ENCODE measurements at regions of chr16 and their contacts with region 1.

Region 1: GRCh38 chr16:23496826-23497542 is 13.3 kb downstream of the GGA2 start:
- DNase-seq: peak; percentile 62
- H3K4me3 Mint-ChIP-seq: peak overlapping the region; percentile 33
- H3K27ac Mint-ChIP-seq: peak overlapping the region; percentile 33
- H3K4me1 Mint-ChIP-seq: peaks cover 29% of the 10 kb centered on the region
- H3K27me3 Mint-ChIP-seq: no peaks in the 10 kb centered on the region
- CTCF ChIP-seq: no peak

Region 2: GRCh38 chr16:23510164-23510914 is 13.4 kb after region 1 on chr16 and contains the start of gene GGA2:
- CTCF ChIA-PET with region 1: interaction called, 11 read pairs
- POLR2A ChIA-PET with region 1: interaction called, 12 read pairs
- intact Hi-C with region 1: no loop called
- DNase-seq: peak; percentile 69
- H3K4me3 Mint-ChIP-seq: peak within 1 kb of the TSS; percentile 90
- H3K27ac Mint-ChIP-seq: peak within 1 kb of the TSS; percentile 46
- H3K4me1 Mint-ChIP-seq: peaks cover 19% of the 10 kb centered on the region
- H3K27me3 Mint-ChIP-seq: no peaks in the 10 kb centered on the region
- CTCF ChIP-seq: no peak
- total RNA-seq, gene GGA2: 22.2 and 40.9 TPM in 2 replicates